ENCODE measurements at regions of chr10 and their contacts with region 1.

Region 1: DNA sequence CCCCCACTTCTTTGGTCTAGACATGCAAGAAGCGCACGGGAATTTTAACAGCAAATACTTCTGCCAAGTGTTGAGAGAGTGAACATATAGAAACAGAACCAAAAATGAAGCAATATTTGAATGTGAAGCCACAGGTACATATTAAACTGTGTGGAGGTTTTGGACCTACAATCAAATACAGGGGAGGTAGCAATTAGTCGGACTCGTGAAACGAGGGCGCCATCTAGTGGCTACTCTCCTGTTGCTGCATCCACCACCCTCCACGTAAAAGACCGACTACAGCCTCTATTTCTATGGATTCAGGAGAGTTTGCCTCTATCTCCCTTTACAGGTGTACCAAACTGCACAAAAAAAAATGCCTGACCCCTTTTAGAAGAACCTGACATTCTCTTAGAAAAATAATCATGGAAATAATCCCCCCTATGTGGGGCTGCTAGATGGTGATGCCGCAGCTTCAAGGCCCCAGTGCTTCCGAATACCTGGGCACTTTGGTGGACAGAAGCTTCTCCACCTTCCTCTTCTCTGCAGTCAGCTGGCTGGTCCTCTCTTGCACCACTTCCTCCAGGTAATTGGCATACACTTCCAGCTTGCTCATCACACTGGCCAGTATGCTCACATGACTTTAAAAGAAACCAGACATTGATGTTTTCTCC is 31.7 kb downstream of the TECTB start:
- DNase-seq: peak; percentile 73 to 83
- H3K4me3 ChIP-seq: no peak overlapping the region
- H3K4me3 Mint-ChIP-seq: no peak overlapping the region
- H3K27ac Mint-ChIP-seq: no peak overlapping the region
- H3K4me1 ChIP-seq: no peaks in the 10 kb centered on the region
- H3K4me1 Mint-ChIP-seq: peaks cover 6% of the 10 kb centered on the region
- H3K27me3 ChIP-seq: no peaks in the 10 kb centered on the region
- H3K27me3 Mint-ChIP-seq: no peaks in the 10 kb centered on the region
- CTCF ChIP-seq: peak; percentile 88 to 89

Region 2: GRCh38 chr10:111076191-111076681 is 1238.7 kb before region 1 on chr10:
- CTCF ChIA-PET with region 1: no interaction called
- POLR2A ChIA-PET with region 1: no interaction called
- intact Hi-C with region 1: loop called (anchors 10 kb)
- DNase-seq: peak; percentile 52 to 80
- H3K4me3 ChIP-seq: peak overlapping the region; percentile 41
- H3K4me3 Mint-ChIP-seq: peak overlapping the region; percentile 75
- H3K27ac Mint-ChIP-seq: no peak overlapping the region
- H3K4me1 ChIP-seq: peaks cover 3% of the 10 kb centered on the region; the same call in 1 of the 2 replicates
- H3K4me1 Mint-ChIP-seq: peaks cover 8% of the 10 kb centered on the region
- H3K27me3 ChIP-seq: no peaks in the 10 kb centered on the region; the same call in 1 of the 2 replicates
- H3K27me3 Mint-ChIP-seq: peaks cover 30% of the 10 kb centered on the region
- CTCF ChIP-seq: peak; percentile 77 to 96

Region 3: GRCh38 chr10:112026438-112026837 is 288.5 kb before region 1 on chr10:
- CTCF ChIA-PET with region 1: interaction called, 5 read pairs
- POLR2A ChIA-PET with region 1: no interaction called
- intact Hi-C with region 1: loop called (anchors 2 kb)
- DNase-seq: peak in 1 of 2 experiments; percentile 11
- H3K4me3 ChIP-seq: no peak overlapping the region
- H3K4me3 Mint-ChIP-seq: no peak overlapping the region
- H3K27ac Mint-ChIP-seq: no peak overlapping the region
- H3K4me1 ChIP-seq: no peaks in the 10 kb centered on the region
- H3K4me1 Mint-ChIP-seq: no peaks in the 10 kb centered on the region
- H3K27me3 ChIP-seq: no peaks in the 10 kb centered on the region
- H3K27me3 Mint-ChIP-seq: peaks cover 3% of the 10 kb centered on the region
- CTCF ChIP-seq: peak in 1 of 2 experiments; percentile 46

Region 4: DNA sequence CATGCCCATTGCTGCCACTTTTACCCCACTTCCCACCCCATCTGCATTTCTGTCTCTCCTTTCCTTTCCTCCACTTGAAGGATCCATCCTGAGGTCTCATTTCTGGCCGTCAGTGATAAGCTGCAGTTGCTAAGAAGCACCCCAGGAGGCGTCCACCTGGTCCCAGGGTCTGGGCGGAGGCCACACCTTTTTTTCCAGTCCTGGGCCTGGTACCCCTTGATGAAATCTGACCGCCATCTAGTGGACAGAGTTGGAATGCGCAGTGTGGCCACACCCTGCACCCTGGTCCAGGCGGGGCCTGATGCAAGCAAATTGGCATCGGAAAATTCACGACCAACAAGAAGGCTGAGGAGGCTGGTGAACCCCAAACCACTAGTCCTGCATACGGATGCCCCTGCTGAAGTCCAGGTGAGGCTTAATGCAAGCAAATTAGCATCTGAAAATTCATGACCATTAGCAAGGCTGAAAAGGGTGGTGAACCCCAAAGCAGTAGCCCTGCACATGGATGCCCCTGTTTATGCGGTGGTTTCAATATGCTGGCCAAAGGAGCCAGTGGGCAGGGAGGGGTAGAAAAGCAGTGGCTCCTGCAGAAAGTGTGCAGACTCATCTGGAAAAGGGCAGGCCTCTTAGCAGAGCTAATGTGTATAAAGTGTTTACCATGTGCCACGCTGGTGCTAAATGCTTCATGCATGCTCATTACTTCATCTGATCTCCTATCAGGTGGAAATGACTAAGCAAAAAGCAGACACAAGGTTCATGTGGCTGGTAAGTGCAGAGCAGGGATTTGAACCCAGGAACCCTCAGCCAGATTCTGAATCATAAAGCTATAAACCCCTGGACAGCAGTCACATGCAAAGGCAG is 174.6 kb before region 1 on chr10:
- CTCF ChIA-PET with region 1: interaction called, 13 read pairs
- POLR2A ChIA-PET with region 1: no interaction called
- intact Hi-C with region 1: loop called (anchors 1 kb)
- DNase-seq: peak; percentile 86 to 89
- H3K4me3 ChIP-seq: no peak overlapping the region
- H3K4me3 Mint-ChIP-seq: no peak overlapping the region
- H3K27ac Mint-ChIP-seq: no peak overlapping the region
- H3K4me1 ChIP-seq: no peaks in the 10 kb centered on the region
- H3K4me1 Mint-ChIP-seq: no peaks in the 10 kb centered on the region
- H3K27me3 ChIP-seq: no peaks in the 10 kb centered on the region
- H3K27me3 Mint-ChIP-seq: no peaks in the 10 kb centered on the region
- CTCF ChIP-seq: peak; percentile 88 to 91

Region 5: DNA sequence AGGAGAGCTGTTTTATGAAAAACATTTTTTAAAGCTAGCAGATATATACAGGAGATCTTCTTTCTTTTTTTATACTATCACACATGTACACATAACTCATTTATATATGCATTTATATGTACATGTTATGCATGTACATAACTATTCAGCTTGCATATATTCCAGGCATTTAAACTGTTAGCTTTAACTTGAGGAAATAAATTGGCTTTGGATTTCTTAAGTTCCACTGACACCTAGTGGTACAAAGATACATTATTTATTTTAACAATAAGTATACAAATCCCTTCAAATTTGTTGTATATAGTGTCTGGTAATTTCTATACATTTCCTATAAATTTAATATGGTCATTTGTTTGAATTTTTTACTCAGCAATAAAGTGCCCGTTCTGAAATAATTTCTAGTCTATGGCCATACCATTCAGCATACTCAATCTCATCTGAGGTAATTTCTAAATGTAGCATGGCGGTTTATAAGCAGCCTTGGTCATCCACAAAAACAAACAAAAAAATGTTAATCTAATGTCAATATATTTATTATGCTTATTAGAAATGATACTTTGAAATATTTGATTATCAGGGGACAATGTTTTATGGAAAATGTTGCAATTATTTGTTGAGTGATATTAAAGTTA is 120.2 kb after region 1 on chr10:
- CTCF ChIA-PET with region 1: interaction called, 28 read pairs
- POLR2A ChIA-PET with region 1: no interaction called
- intact Hi-C with region 1: loop called (anchors 1 kb)
- DNase-seq: no peak
- H3K4me3 ChIP-seq: no peak overlapping the region
- H3K4me3 Mint-ChIP-seq: no peak overlapping the region
- H3K27ac Mint-ChIP-seq: no peak overlapping the region
- H3K4me1 ChIP-seq: no peaks in the 10 kb centered on the region
- H3K4me1 Mint-ChIP-seq: no peaks in the 10 kb centered on the region
- H3K27me3 ChIP-seq: no peaks in the 10 kb centered on the region
- H3K27me3 Mint-ChIP-seq: no peaks in the 10 kb centered on the region
- CTCF ChIP-seq: peak; percentile 31 to 57

Region 6: DNA sequence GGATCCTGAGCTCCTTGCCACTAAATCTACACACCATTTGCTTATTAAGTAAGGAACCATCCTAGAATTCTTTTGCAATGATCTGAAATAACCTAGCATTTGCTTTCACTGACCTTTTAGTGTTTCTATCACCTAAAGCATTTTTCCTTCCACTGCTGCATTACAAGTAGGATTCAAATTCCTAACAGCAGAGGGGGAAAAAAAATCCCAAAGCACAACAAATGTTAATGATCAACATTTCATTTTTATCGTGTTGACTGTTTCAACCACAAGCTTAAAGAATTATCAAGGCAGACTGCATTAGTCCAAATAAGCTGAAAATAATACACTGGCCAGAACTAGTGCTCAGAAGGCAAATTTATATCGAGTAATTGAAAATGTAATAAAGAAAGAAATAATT is 460.4 kb after region 1 on chr10:
- CTCF ChIA-PET with region 1: no interaction called
- POLR2A ChIA-PET with region 1: no interaction called
- intact Hi-C with region 1: no loop called
- DNase-seq: peak in 1 of 2 experiments; percentile 33
- H3K4me3 ChIP-seq: no peak overlapping the region
- H3K4me3 Mint-ChIP-seq: no peak overlapping the region
- H3K27ac Mint-ChIP-seq: no peak overlapping the region
- H3K4me1 ChIP-seq: peaks cover 59% of the 10 kb centered on the region
- H3K4me1 Mint-ChIP-seq: peaks cover 43% of the 10 kb centered on the region
- H3K27me3 ChIP-seq: no peaks in the 10 kb centered on the region
- H3K27me3 Mint-ChIP-seq: no peaks in the 10 kb centered on the region
- CTCF ChIP-seq: peak; percentile 32 to 34

Measured in Caco-2 (cell line).